ENCODE measurements at regions of chr16 and their contacts with region 1.

Region 1: GRCh38 chr16:11896777-11897176 is 19.0 kb downstream of the GSPT1 start:
- DNase-seq: no peak
- ATAC-seq: no peak
- H3K4me3 ChIP-seq: no peak overlapping the region
- H3K27ac ChIP-seq: no peak overlapping the region
- H3K4me1 ChIP-seq: peaks cover 10 to 12% of the 10 kb centered on the region in 2 donors
- H3K27me3 ChIP-seq: no peaks in the 10 kb centered on the region
- CTCF ChIP-seq: no peak
- POLR2A ChIP-seq: no peak

Region 2: DNA sequence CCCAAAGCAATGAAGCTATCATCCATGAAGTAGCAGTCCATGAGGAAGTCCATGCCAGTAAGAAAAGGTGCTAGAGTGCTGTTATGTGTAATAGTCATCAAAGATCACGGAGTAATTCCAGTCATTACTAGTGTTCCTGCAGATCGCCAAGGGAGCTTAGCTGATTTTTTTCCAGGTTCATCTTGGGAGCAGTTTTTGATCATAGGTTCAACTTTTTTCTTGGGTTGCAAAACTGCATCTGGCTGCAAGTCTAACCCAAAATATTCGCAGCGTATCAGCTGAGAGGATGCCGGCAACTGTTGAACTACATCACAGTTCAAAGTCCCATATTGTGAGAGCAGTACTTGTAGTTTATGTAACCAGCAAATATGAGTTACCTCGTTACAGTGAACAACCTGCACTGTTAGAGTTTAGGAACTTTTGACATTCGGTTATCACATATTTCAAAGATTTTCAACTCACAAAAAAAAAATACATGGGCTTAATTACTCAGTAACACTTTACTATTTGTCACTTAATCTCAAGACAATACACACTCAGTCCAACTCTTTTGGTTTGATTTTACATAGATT is 27.0 kb before region 1 on chr16:
- in situ Hi-C with region 1: no loop called
- intact Hi-C with region 1: loop called (anchors 1 kb)
- DNase-seq: no peak
- ATAC-seq: no peak
- H3K4me3 ChIP-seq: no peak overlapping the region
- H3K27ac ChIP-seq: peak overlapping the region in 1 of 4 donors; percentile 61
- H3K4me1 ChIP-seq: peaks cover 26 to 34% of the 10 kb centered on the region in 2 donors
- H3K27me3 ChIP-seq: no peaks in the 10 kb centered on the region
- CTCF ChIP-seq: no peak
- POLR2A ChIP-seq: no peak